ENCODE measurements at regions of chr1 and their contacts with region 1.

Region 1: GRCh38 chr1:39653546-39654031 is 14.1 kb upstream of the HEYL start:
- DNase-seq: peak; percentile 85 to 90
- ATAC-seq: peak; percentile 84
- H3K4me3 ChIP-seq: no peak overlapping the region
- H3K27ac ChIP-seq: no peak overlapping the region
- H3K4me1 ChIP-seq: peaks cover 0 to 2% of the 10 kb centered on the region in 2 donors
- H3K27me3 ChIP-seq: no peaks in the 10 kb centered on the region

Region 2: DNA sequence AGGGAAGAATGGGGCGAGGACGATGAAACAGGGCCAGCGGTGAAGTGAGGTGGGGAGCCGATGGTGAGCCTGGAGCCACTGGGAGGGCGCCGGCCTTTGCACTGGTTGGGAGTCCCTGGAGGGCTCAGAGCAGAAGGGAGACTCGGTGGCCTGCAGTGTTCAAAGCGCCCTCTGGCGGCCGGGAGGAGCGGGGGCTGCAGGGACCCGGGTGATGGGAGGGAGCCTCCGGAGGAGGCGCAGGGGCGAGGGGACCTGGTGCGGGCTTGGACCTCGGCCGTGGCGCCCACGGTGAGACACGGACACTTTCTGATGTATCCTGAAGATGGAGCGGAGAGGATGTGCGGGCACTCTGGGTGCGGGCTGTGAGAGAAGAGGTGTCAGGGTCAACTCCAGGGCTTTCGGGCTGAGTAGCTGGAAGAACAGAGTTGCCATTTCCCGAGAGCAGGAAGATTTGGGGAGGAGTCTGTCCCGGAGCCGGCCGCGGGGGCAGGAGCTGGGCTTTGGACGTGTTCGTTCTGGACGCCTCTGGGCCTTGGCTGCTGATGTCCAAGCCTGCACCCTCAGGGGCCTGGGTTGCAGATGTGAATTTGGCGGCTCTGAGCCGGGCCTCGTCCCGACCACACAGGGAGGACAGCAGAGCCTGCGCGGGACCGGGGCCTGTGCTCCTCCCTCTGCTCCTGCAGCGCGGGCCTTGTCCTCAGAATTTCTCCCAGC is 43.8 kb before region 1 on chr1:
- intact Hi-C with region 1: loop called (anchors 1 kb)
- DNase-seq: peak; percentile 66 to 92
- ATAC-seq: peak; percentile 89
- H3K4me3 ChIP-seq: no peak overlapping the region
- H3K27ac ChIP-seq: no peak overlapping the region
- H3K4me1 ChIP-seq: no peaks in the 10 kb centered on the region
- H3K27me3 ChIP-seq: no peaks in the 10 kb centered on the region

Region 3: GRCh38 chr1:39720094-39720999 is 66.8 kb after region 1 on chr1:
- intact Hi-C with region 1: loop called in 1 of 2 experiments (anchors 5 kb)
- DNase-seq: no peak
- ATAC-seq: peak; percentile 82
- H3K4me3 ChIP-seq: no peak overlapping the region
- H3K27ac ChIP-seq: no peak overlapping the region
- H3K4me1 ChIP-seq: no peaks in the 10 kb centered on the region
- H3K27me3 ChIP-seq: no peaks in the 10 kb centered on the region